ENCODE measurements at regions of chr5 and their contacts with region 1.

Region 1: DNA sequence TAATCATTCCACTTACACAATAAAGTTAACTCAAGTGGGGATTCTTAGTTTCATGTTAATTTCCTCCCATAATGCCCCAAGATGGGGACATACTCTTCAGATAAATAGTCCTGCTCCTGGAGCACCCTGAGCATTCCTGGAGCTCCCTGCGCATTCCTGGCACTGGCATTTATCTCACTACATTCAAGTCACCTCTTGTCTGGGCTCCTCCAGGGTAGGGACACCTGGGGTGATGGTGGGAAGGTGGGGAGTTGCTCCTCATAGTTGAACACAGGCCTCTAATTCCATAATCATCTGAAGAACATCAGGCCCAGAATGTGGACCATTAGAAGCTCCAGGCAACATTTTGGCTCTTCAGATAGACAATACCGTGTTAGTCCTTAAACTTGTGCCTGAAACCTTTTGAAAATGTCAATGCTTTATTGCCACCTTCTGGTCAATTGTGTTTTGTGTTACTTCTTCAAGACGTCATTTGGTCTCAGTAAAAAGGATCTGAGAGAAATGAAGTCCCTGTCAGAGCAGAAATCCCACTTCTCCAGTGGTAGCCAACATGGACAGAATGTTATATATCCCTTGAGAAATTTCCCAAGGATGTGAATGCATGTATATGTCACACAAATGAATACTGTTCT is 14.2 kb upstream of the AGGF1 start:
- DNase-seq: peak; percentile 83 to 90 (median 88)
- H3K4me3 ChIP-seq: no peak overlapping the region
- H3K27ac ChIP-seq: no peak overlapping the region
- H3K4me1 ChIP-seq: no peaks in the 10 kb centered on the region
- H3K27me3 ChIP-seq: no peaks in the 10 kb centered on the region

Region 2: GRCh38 chr5:76867827-76868693 is 148.0 kb before region 1 on chr5:
- CTCF ChIA-PET with region 1: interaction called, 59 read pairs
- POLR2A ChIA-PET with region 1: no interaction called
- DNase-seq: peak; percentile 75 to 89 (median 84)
- H3K4me3 ChIP-seq: no peak overlapping the region
- H3K27ac ChIP-seq: no peak overlapping the region
- H3K4me1 ChIP-seq: peaks cover 0 to 9% (median 6%) of the 10 kb centered on the region in 4 experiments
- H3K27me3 ChIP-seq: no peaks in the 10 kb centered on the region

Region 3: DNA sequence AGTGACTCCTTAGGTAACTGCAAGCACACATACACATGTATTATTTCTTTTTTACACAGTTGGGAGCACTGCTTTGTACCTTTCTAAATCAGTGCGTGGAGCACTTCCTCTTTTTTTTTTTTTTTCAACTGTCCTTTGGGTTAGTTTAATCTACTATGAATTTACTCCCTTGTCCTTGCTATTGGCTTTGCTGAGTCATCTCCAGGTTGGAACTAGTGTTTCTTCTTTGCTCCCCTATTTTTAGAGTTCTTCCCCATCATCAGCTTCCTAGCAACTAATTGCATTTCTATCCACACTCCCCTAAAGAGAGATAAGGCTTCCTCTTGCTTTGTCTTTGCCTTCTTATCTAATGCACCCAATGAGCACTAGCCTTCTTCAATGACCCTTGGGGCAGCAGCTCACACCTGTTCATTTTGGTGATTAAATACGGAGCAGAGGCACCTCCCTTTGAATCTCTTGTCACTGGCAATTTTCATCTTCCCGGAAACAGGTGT is 141.9 kb before region 1 on chr5:
- CTCF ChIA-PET with region 1: interaction called, 59 read pairs
- POLR2A ChIA-PET with region 1: no interaction called
- DNase-seq: peak; percentile 43 to 84 (median 78)
- H3K4me3 ChIP-seq: no peak overlapping the region
- H3K27ac ChIP-seq: no peak overlapping the region
- H3K4me1 ChIP-seq: peaks cover 3 to 13% (median 6%) of the 10 kb centered on the region in 4 experiments
- H3K27me3 ChIP-seq: no peaks in the 10 kb centered on the region

Region 4: DNA sequence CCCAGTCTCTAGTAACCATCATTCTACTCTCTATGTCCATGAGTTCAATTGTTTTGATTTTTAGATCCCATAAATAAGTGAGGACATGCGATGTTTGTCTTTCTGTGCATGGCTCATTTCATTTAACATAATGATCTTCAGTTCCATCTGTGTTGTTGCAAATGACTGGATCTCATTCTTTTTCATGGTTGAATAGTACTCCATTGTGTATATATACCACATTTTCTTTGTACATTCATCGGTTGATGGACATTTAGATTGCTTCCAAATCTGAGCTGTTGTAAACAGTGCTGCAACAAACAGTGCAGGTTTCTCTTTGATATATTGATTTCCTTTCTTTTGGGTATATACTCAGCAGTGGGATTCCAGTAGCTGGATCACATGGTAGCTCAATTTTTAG is 119.9 kb before region 1 on chr5:
- CTCF ChIA-PET with region 1: no interaction called
- POLR2A ChIA-PET with region 1: no interaction called
- DNase-seq: no peak
- H3K4me3 ChIP-seq: no peak overlapping the region
- H3K27ac ChIP-seq: no peak overlapping the region
- H3K4me1 ChIP-seq: peaks cover 0 to 2% (median 0%) of the 10 kb centered on the region in 4 experiments
- H3K27me3 ChIP-seq: no peaks in the 10 kb centered on the region

Region 5: GRCh38 chr5:76974785-76975184 is 41.3 kb before region 1 on chr5:
- CTCF ChIA-PET with region 1: interaction called, 16 read pairs
- POLR2A ChIA-PET with region 1: no interaction called
- DNase-seq: peak in 2 of 3 donors; percentile 30 to 38
- H3K4me3 ChIP-seq: no peak overlapping the region
- H3K27ac ChIP-seq: no peak overlapping the region
- H3K4me1 ChIP-seq: peaks cover 5 to 11% (median 7%) of the 10 kb centered on the region in 4 experiments
- H3K27me3 ChIP-seq: no peaks in the 10 kb centered on the region

Region 6: GRCh38 chr5:77030097-77031071 is 14.3 kb after region 1 on chr5 and contains the start of gene AGGF1:
- CTCF ChIA-PET with region 1: interaction called, 16 read pairs
- POLR2A ChIA-PET with region 1: no interaction called
- DNase-seq: peak; percentile 91 to 98 (median 96)
- H3K4me3 ChIP-seq: peak within 1 kb of the TSS; percentile 84 to 97 (median 90)
- H3K27ac ChIP-seq: peak within 1 kb of the TSS; percentile 85 to 91
- H3K4me1 ChIP-seq: peaks cover 4 to 24% (median 8%) of the 10 kb centered on the region in 4 experiments
- H3K27me3 ChIP-seq: no peaks in the 10 kb centered on the region